ENCODE measurements at regions of chr11 and their contacts with region 1.

Region 1: GRCh38 chr11:11621573-11622319 is at the start of gene GALNT18:
- DNase-seq: peak; percentile 93
- ATAC-seq: peak; percentile 97
- total RNA-seq, gene GALNT18: 20.1 to 21.5 TPM

Region 2: GRCh38 chr11:11391796-11392195 is 229.9 kb before region 1 on chr11:
- intact Hi-C with region 1: loop called in 1 of 2 experiments (anchors 10 kb)
- DNase-seq: no peak
- ATAC-seq: peak; percentile 38 to 46

Region 3: GRCh38 chr11:11463405-11463804 is 158.3 kb before region 1 on chr11:
- intact Hi-C with region 1: loop called in 1 of 2 experiments (anchors 2 kb)
- DNase-seq: no peak
- ATAC-seq: peak in 1 of 2 donors; percentile 16

Region 4: GRCh38 chr11:11577251-11577855 is 44.4 kb before region 1 on chr11:
- intact Hi-C with region 1: loop called in 1 of 2 experiments (anchors 2 kb)
- DNase-seq: peak; percentile 41
- ATAC-seq: peak in 1 of 2 donors; percentile 45

Region 5: DNA sequence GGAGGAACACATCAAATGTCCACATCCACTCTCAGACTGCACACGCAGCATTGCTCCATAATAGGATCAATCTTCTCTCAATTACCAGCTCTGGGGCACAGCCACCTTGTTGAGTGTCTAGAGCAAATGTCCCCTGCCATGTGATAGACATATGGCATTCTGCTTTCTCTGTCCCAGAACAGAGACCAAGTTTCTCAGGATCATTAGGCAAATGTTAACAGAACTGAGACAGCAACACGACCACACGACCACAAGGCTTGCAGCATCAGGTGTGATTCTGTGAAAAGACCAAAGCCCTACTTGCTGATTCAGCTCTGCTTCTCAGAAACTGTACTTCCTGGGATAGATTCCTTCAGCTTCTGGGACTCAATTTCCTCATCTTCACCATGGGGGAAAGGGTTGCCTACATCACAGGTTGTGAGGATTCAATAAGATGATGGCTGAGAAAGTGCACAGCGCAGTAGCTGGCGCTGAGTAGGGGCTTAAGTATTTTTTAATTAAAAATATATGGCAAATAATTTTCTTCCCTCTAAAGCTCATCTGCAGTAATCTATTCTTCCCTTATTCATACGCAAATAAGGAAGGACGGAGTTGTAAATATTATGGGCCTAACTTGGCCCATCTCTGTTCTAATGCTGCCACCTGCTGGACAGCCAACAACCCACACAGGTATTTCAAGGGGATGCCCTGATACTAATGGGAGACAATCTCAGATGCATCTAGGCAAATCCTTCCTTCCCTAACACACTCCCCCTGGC is 165.7 kb after region 1 on chr11:
- intact Hi-C with region 1: loop called in 1 of 2 experiments (anchors 5 kb)
- DNase-seq: peak; percentile 71
- ATAC-seq: peak; percentile 93

Measured in left cardiac atrium (tissue), 4 donors.